ENCODE measurements at regions of chr10 and their contacts with region 1.

Region 1: DNA sequence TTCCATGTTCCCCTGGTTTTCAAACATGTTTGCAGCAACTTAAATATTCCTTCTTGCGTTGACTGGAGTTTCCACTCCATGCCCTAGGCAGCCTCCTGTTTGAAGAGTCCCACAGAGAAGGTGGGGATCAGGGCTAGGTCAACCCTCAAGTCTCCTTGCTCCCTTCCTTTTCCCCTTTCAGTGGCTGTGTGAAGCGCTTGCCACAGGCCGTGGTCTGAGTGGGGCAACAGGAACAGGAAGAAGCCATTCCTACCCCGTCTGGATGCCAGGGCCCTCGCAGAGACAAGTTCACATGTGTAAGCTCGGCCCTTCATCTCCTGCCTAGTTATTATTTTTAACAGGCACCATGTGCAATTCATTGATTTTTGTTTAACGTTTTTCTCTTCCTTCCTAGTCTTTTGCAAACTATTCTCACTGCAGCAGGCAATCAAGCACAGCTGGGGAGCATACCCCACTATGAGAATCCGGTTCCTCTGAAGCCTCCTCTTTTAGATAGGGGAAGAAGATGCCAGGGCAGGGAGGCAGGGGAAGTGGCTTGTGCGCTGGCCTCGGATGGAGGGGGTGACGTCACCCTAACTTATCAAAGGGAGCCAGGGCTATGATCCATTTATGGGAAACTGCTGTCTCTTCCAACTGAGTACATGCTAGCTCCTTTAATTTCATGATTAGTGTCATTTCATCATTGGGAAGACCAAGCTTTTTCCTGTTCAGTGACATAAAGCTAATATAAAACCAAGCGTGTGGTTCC is 64.2 kb downstream of the PRLHR start:
- DNase-seq: no peak
- H3K4me3 Mint-ChIP-seq: no peak overlapping the region
- H3K27ac Mint-ChIP-seq: no peak overlapping the region
- H3K4me1 Mint-ChIP-seq: peaks cover 6% of the 10 kb centered on the region
- H3K27me3 Mint-ChIP-seq: no peaks in the 10 kb centered on the region
- CTCF ChIP-seq: no peak

Region 2: GRCh38 chr10:118557946-118558345 is 26.7 kb after region 1 on chr10:
- CTCF ChIA-PET with region 1: no interaction called
- POLR2A ChIA-PET with region 1: no interaction called
- intact Hi-C with region 1: loop called (anchors 1 kb)
- DNase-seq: peak; percentile 25
- H3K4me3 Mint-ChIP-seq: no peak overlapping the region
- H3K27ac Mint-ChIP-seq: no peak overlapping the region
- H3K4me1 Mint-ChIP-seq: no peaks in the 10 kb centered on the region
- H3K27me3 Mint-ChIP-seq: peaks cover 36% of the 10 kb centered on the region
- CTCF ChIP-seq: no peak

Measured in MCF 10A (cell line).